ENCODE measurements at regions of chr4 and their contacts with region 1.

Region 1: DNA sequence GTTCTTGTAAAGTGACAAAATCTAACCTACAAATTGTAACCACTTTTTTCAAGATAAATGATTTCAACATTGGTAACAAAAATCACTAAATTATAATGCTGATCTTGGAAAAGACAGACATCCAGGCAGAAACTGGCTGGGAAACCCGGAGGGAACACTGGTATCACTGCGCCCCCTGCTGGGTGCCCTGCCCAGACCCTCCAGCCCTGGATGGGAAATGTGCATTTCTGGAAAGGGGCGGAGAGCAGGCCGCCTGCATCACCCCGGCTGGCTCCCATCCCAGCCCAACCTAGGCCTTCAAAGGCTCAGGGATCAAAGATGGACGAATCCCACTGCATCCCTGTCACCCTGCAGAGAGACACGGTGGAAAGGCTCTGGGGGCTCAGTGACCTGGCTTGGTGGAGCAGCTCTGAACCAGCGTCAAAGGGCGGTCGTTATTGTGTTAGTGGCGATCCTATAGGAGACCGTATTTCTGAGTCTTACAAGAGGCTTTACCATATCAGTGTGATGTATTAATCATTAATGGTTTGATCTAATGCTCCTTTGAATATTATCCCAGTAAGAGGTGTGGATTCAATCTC is 37.3 kb downstream of the ACOX3 start:
- DNase-seq: peak; percentile 85 to 88
- H3K4me3 ChIP-seq: no peak overlapping the region
- H3K27ac ChIP-seq: peak overlapping the region; percentile 35 to 56
- H3K4me1 ChIP-seq: peaks cover 0 to 12% of the 10 kb centered on the region in 2 donors
- H3K27me3 ChIP-seq: no peaks in the 10 kb centered on the region
- CTCF ChIP-seq: peak; percentile 88 to 97 (median 92)
- POLR2A ChIP-seq: no peak

Region 2: DNA sequence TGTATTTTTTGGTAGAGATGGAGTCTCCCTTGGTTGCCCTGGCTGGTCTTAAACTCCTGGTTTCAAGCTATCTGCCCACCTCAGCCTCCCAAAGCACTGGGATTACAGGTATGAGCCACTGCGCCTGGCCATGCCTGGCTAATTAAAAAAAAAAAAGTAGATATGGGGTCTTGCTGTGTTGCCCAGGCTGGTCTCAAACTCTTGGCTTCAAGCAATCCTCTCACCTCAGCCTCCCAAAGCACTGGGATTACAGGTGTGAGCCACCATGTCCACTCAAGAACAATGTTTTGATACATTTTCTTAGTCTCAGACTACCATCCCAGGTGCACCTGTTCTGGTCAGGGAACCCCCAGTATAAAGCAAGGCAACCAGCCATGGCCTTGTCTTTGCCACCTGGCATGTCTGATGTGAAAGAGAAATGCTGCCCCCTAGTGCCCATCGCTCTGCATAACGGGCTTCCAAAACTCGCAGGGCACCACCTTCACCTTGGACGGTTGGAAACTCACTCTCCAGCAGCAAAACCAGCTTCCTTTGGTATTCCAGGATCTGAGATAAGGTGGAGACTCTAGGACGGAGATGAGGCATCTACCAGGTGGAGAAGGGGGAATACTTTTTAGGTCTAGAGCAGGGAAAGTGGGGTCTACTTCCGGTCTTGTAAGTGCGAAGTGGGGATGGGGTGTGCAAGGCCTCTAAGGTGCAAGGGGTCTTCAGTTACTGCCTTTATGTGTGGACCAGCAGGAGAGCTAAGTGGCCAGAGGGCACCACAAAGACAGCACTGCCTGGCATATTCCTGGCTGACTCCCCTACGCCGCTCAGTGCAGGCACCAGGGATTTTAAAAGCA is 415.9 kb before region 1 on chr4:
- intact Hi-C with region 1: no loop called
- DNase-seq: peak; percentile 63 to 73
- H3K4me3 ChIP-seq: no peak overlapping the region
- H3K27ac ChIP-seq: no peak overlapping the region
- H3K4me1 ChIP-seq: no peaks in the 10 kb centered on the region
- H3K27me3 ChIP-seq: no peaks in the 10 kb centered on the region
- CTCF ChIP-seq: peak; percentile 79 to 87 (median 84)
- POLR2A ChIP-seq: no peak

Region 3: GRCh38 chr4:8241895-8242696 is 161.2 kb before region 1 on chr4:
- intact Hi-C with region 1: loop called (anchors 2 kb)
- DNase-seq: peak; percentile 87 to 91
- H3K4me3 ChIP-seq: no peak overlapping the region
- H3K27ac ChIP-seq: peak overlapping the region; percentile 5 to 38
- H3K4me1 ChIP-seq: peaks cover 0 to 3% of the 10 kb centered on the region in 2 donors
- H3K27me3 ChIP-seq: no peaks in the 10 kb centered on the region
- CTCF ChIP-seq: peak; percentile 92 to 99 (median 96)
- POLR2A ChIP-seq: no peak

Region 4: DNA sequence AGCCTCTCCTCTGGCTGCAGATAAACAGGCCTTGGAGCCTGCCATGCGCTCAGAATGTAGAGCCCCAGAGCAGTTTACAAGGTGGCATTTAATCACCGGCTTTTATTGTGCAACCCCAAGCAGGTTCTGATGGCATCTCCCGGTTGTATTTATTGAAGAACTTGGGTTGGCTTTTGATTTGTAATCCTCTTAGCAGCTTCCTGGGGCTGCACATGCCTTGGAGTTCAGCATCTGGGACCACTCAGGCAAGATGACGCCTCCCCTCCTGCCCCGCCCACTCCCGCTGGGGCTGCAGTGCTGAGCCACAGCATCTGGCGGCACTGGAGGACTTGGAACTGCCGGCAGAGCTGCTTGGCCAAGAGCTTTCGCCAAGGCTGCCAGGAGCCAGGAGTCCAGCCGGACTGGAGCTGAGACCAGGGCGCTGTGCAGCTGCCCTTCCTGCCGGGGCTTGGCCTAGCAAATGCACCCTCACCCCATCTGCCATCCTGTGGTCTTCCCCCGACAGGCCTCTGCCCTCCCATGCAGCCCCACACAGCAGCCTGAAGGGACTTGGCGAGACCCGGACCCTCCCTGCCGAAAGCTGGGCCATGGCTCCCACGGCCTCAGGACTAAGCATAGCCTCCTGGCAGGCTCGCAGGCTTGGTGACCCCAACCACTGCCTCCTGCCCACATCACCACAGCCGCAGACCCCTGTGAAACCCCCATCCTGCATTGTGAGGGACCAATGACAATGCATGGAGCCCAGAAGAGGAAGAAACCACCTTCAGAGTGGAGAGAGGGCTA is 128.3 kb before region 1 on chr4:
- intact Hi-C with region 1: loop called (anchors 10 kb)
- DNase-seq: peak; percentile 92 to 95
- H3K4me3 ChIP-seq: no peak overlapping the region
- H3K27ac ChIP-seq: peak overlapping the region; percentile 61 to 72
- H3K4me1 ChIP-seq: peaks cover 4 to 6% of the 10 kb centered on the region in 2 donors
- H3K27me3 ChIP-seq: no peaks in the 10 kb centered on the region
- CTCF ChIP-seq: peak; percentile 41 to 62 (median 52)
- POLR2A ChIP-seq: no peak

Region 5: DNA sequence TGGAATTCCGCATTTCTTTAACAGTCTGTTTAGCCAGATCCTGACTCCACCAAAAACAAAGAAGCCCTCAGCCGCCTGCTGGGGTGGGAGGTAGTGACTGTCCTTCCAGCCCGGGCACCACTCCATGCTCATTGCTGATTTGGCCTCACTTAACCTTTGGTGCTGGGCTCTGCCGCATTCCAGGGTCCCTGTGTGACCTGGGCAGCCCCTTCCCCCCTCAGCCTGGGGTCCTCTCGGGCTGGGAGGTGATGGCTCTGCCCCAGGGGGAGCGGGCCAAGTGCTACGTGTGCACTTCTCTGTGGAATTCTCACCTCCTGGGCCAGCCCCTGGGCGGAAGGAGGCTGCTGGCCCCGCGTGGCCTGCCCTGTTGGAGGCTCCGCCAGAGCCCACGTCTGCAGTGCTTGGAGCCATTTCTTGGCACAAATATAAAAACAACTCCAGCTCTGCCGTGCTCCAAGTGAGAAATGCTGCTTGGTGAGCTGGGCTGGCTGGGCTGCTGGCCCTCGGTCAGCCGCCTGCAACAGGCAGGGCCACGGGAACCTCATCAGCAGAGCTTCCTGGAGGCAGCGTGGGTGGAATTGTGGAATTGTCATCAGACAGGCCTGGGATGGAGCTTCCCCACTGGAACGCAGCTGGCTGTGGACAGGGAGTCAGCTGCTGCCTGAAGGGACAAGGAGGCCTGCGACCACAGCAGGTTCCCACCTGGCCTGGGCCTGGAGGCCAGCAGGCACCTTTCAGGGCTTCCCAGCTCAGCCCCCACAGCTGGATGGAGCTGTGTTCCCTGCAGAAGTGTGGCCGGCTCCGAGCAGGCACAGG is 103.3 kb after region 1 on chr4:
- intact Hi-C with region 1: no loop called
- DNase-seq: peak; percentile 64 to 65
- H3K4me3 ChIP-seq: no peak overlapping the region
- H3K27ac ChIP-seq: peak overlapping the region; percentile 73 to 86
- H3K4me1 ChIP-seq: peaks cover 6 to 12% of the 10 kb centered on the region in 2 donors
- H3K27me3 ChIP-seq: no peaks in the 10 kb centered on the region
- CTCF ChIP-seq: no peak
- POLR2A ChIP-seq: no peak

Region 6: GRCh38 chr4:8639777-8640720 is 236.8 kb after region 1 on chr4:
- intact Hi-C with region 1: no loop called
- DNase-seq: no peak
- H3K4me3 ChIP-seq: no peak overlapping the region
- H3K27ac ChIP-seq: no peak overlapping the region
- H3K4me1 ChIP-seq: no peaks in the 10 kb centered on the region
- H3K27me3 ChIP-seq: no peaks in the 10 kb centered on the region
- CTCF ChIP-seq: no peak
- POLR2A ChIP-seq: no peak

Region 7: DNA sequence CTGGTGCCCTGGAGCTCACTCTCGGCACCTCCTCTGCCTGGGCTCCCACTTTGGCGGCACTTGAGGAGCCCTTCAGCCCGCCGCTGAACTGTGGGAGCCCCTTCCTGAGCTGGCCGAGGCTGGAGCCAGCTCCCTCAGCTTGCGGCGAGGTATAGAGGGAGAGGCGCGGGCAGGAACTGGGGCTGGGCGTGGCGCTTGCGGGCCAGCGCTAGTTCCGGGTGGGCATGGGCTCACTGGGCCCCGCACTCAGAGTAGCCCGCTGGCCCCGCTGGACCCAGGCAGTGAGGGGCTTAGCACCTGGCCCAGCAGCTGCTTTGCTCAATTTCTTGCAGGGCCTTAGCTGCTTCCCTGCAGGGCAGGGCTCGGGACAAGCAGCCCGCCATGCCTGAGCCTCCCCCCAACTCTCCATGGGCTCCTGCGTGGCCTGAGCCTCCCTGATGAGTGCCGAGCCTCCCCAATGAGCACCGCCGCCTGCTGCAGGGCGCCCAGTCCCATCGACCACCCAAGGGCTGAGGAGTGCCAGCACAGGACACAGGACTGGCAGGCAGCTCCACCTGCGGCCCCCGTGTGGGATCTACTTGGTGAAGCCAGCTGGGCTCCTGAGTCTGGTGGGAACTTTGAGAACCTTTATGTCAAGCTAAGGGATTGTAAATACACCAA is 740.3 kb after region 1 on chr4:
- intact Hi-C with region 1: no loop called
- DNase-seq: no peak
- H3K4me3 ChIP-seq: no peak overlapping the region
- H3K27ac ChIP-seq: no peak overlapping the region
- H3K4me1 ChIP-seq: no peaks in the 10 kb centered on the region
- H3K27me3 ChIP-seq: no peaks in the 10 kb centered on the region
- CTCF ChIP-seq: no peak
- POLR2A ChIP-seq: no peak

Measured in uterus (tissue), 4 donors.